ENCODE measurements at regions of chr11 and their contacts with region 1.

Region 1: GRCh38 chr11:96054870-96055705 is 131.2 kb upstream of the MTMR2 start:
- DNase-seq: no peak
- H3K4me3 ChIP-seq: no peak overlapping the region
- CTCF ChIP-seq: peak; percentile 46

Region 2: GRCh38 chr11:95835768-95836488 is 219.2 kb before region 1 on chr11:
- CTCF ChIA-PET with region 1: interaction called, 11 read pairs
- POLR2A ChIA-PET with region 1: no interaction called
- DNase-seq: peak; percentile 82
- H3K4me3 ChIP-seq: no peak overlapping the region
- CTCF ChIP-seq: peak; percentile 79

Region 3: GRCh38 chr11:96070461-96070860 is 15.4 kb after region 1 on chr11:
- CTCF ChIA-PET with region 1: interaction called, 11 read pairs
- POLR2A ChIA-PET with region 1: no interaction called
- DNase-seq: no peak
- H3K4me3 ChIP-seq: no peak overlapping the region
- CTCF ChIP-seq: no peak

Region 4: DNA sequence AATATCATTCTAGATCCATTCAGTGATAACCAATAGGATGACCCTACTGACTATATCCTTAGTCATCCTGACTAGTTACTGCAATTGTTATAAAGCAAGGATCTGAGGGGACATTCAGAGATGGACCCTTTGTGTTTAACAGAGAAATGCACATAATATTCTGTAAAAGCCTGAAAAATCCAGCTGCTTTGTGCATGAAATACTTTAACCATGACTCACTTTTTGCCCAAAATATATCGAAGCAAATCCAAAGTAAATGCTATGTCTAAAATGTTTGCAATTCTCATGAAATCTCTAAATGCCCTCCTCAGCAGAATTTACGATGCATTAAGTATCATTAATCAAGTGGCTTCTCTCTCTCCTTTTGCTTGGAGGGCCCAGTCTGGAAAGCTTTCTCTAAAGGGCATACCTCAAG is 47.6 kb after region 1 on chr11:
- CTCF ChIA-PET with region 1: interaction called, 29 read pairs
- POLR2A ChIA-PET with region 1: no interaction called
- DNase-seq: no peak
- H3K4me3 ChIP-seq: no peak overlapping the region
- CTCF ChIP-seq: no peak

Region 5: GRCh38 chr11:96389720-96390487 is 334.8 kb after region 1 on chr11 and contains the starts of genes CCDC82 and JRKL:
- CTCF ChIA-PET with region 1: interaction called, 32 read pairs
- POLR2A ChIA-PET with region 1: no interaction called
- DNase-seq: peak; percentile 71
- H3K4me3 ChIP-seq: peak within 1 kb of the TSS; percentile 82
- CTCF ChIP-seq: no peak